ENCODE measurements at regions of chr6 and their contacts with region 1.

Region 1: DNA sequence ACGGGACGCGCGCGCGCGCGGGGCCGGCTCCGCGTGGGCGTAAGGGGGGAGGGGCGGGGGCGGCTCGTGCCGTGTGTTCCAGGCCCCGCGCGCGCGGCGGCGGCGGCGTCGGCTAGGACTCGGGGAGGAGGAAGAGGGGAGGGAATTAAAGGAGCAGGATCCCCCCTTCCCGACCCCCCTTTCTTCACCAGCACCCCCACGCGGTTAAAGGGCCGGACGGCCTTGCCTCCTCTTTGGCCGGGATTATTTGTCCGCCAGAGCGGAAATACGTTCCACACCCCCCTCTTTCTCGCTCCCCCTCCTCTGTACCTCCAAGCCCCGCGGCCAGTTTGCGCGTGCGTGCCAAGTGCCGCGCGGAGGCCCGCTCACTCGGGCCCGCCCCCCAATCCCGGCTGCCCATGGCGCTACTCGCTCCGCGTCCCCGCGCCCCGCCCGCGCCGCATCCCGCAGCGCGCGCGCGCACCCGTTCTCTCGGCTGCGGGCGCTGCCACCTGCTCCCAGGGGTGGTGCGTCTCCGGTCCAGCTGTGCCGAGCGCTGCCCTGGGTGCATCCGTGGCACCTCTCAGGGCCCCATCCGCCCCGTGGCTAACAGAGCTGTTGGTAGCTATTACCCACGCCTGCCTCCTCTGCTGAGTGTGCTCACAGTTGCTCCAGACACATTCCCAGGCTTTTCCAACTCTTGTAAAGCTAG is at the start of gene ZBTB12:
- DNase-seq: peak; percentile 83
- ATAC-seq: peak; percentile 69
- H3K4me3 Mint-ChIP-seq: peak within 1 kb of the TSS; percentile 89
- H3K27ac Mint-ChIP-seq: peak within 1 kb of the TSS; percentile 86
- H3K4me1 Mint-ChIP-seq: peaks cover 27% of the 10 kb centered on the region
- H3K27me3 Mint-ChIP-seq: no peaks in the 10 kb centered on the region
- CTCF ChIP-seq: no peak
- total RNA-seq, gene ZBTB12: 4.8 and 5.5 TPM in 2 replicates

Region 2: DNA sequence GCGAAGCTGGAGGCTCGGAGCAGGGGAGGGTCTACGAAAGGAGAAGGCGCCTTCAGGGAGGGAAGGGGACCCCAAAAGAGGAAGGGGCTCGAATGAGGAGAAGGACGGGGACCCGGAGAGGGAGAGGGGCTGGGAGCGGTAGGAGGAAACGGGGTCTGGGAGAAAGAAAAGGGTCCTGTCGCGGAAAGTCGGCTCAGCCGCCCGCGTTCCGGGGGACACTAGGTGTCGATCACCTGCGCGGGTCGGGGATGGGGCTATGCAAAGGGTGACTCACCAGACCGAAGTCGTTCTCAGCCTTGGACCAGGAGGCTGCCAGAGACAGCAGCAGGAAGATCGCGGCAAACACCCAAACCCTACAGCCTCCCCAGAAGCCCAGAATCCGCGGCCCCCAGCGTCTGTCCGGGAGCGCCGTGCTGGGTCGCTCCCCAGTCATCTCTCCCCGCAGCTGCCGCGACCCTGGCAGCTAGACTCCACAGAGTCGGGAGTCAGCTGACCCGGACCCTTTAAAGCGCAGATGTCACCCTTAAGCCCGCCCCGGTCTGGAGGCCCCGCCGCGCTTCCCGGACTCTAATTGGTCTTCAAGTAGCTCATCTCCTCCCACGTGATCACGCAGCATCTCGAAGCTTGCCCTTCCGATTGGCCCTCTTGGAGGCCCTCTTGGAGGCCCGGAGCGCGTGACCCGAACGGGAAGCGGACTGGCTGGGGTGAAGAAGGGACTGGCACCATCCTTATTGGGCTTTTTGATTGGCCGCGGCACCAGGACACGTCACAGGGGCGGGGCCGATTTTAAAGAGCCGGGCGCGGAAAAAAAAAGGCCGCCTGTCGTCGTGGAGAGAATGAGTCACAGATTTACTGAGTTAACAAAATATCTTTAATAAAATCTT is 39.5 kb before region 1 on chr6 and contains the start of gene NEU1:
- CTCF ChIA-PET with region 1: no interaction called
- POLR2A ChIA-PET with region 1: interaction called, 29 read pairs
- intact Hi-C with region 1: loop called (anchors 1 kb)
- DNase-seq: peak; percentile 93
- ATAC-seq: peak; percentile 91
- H3K4me3 Mint-ChIP-seq: peak within 1 kb of the TSS; percentile 95
- H3K27ac Mint-ChIP-seq: peak within 1 kb of the TSS; percentile 93
- H3K4me1 Mint-ChIP-seq: peaks cover 21% of the 10 kb centered on the region
- H3K27me3 Mint-ChIP-seq: no peaks in the 10 kb centered on the region
- CTCF ChIP-seq: no peak
- total RNA-seq, gene NEU1: 18.3 and 19.2 TPM in 2 replicates

Region 3: DNA sequence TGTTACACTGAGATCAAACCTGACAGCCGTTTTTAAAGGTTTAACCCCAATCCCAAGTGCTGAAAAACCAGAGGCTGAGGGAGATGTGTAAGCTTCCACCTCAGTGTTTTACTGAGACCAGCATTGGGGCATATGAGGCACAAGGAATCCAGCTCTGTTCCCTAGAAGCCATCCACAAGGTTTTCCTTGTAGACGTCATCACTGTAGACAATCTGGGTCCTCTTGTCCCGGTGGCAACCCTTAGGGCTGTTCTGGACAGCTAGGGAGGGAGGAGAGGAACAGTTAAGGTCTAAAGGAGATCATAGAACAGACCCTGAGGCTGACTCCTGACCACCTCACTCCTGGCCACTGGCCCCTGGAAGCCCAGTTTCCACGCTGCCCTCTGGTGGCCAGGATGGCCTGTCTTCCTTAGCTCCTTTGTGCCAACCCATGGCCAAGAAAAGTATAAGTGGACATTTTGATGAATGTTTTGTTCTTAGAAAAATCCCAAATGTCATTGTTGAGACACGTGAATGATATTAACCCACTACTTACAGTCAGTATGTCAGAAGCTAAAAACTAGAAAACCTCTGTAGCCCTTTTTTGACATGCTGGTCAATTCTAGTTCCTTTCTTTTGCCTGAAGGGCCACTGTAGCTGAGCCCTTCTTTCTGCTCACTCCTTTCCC is 50.2 kb after region 1 on chr6:
- CTCF ChIA-PET with region 1: no interaction called
- POLR2A ChIA-PET with region 1: interaction called, 5 read pairs
- intact Hi-C with region 1: loop called (anchors 1 kb)
- DNase-seq: no peak
- ATAC-seq: no peak
- H3K4me3 Mint-ChIP-seq: no peak overlapping the region
- H3K27ac Mint-ChIP-seq: peak overlapping the region; percentile 8
- H3K4me1 Mint-ChIP-seq: peaks cover 1% of the 10 kb centered on the region
- H3K27me3 Mint-ChIP-seq: no peaks in the 10 kb centered on the region
- CTCF ChIP-seq: no peak

Region 4: DNA sequence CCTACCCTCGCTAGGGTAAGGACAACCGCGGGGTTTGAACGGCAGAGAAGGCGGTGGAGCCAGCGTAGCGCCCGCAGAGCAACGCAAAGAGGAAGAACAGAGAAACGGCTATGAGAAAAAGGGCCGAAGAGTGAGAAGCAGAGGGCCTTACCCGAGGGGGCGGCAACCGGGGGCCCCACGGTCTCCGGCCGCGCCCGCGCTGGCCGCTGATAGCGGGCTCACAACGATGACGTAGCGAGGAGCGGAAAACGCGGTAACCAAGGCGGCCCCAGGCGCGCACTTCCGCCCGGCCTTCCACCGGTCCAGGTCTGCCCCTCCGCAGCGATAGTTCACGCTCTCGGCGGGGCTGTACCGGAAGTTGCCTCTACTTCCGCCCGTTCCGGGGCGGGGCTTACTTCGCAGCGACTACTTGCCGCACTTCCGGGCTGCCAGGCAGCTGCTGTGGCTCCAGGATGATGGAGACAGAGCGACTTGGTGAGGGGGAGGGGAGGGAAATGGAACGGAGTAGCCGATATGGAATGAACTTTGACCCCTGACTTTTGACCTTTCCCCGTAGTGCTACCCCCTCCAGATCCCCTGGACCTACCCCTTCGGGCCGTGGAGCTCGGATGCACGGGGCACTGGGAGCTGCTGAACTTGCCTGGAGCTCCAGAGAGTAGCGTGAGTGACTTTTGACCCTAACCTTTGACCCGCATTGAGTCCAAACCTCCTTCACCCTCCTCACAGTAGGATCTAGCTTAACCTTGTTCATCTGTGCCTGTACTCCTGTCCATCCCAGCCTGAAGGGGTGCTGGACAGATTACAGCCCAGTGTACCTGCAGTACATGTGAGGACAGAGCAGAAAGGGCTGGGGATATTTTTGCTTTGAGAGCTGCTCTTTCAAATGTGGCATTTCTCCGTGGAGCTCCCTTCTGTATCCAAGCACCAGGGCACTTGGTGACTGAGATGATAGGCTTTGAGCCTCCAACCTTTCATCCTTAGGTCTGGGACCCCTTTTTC is 56.9 kb after region 1 on chr6 and contains the starts of genes NELFE and SKIC2:
- CTCF ChIA-PET with region 1: no interaction called
- POLR2A ChIA-PET with region 1: interaction called, 9 read pairs
- intact Hi-C with region 1: loop called (anchors 1 kb)
- DNase-seq: peak; percentile 96
- ATAC-seq: peak; percentile 98
- H3K4me3 Mint-ChIP-seq: peak within 1 kb of the TSS; percentile 95
- H3K27ac Mint-ChIP-seq: peak within 1 kb of the TSS; percentile 94
- H3K4me1 Mint-ChIP-seq: peaks cover 33% of the 10 kb centered on the region
- H3K27me3 Mint-ChIP-seq: no peaks in the 10 kb centered on the region
- CTCF ChIP-seq: no peak
- total RNA-seq, gene NELFE: 57.9 and 63.3 TPM in 2 replicates
- total RNA-seq, gene SKIC2: 95.8 and 102 TPM in 2 replicates

Region 5: GRCh38 chr6:31971993-31972708 is 70.1 kb after region 1 on chr6 and contains the start of gene DXO:
- CTCF ChIA-PET with region 1: no interaction called
- POLR2A ChIA-PET with region 1: interaction called, 12 read pairs
- intact Hi-C with region 1: no loop called
- DNase-seq: peak; percentile 96
- ATAC-seq: peak; percentile 89
- H3K4me3 Mint-ChIP-seq: peak within 1 kb of the TSS; percentile 98
- H3K27ac Mint-ChIP-seq: peak within 1 kb of the TSS; percentile 100
- H3K4me1 Mint-ChIP-seq: peaks cover 39% of the 10 kb centered on the region
- H3K27me3 Mint-ChIP-seq: no peaks in the 10 kb centered on the region
- CTCF ChIP-seq: no peak
- total RNA-seq, gene DXO: 23.7 and 29.4 TPM in 2 replicates

Region 6: GRCh38 chr6:32177788-32178546 is 275.9 kb after region 1 on chr6 and contains the start of gene RNF5:
- CTCF ChIA-PET with region 1: no interaction called
- POLR2A ChIA-PET with region 1: no interaction called
- intact Hi-C with region 1: loop called (anchors 5 kb)
- DNase-seq: peak; percentile 63
- ATAC-seq: peak; percentile 82
- H3K4me3 Mint-ChIP-seq: peak within 1 kb of the TSS; percentile 96
- H3K27ac Mint-ChIP-seq: peak within 1 kb of the TSS; percentile 99
- H3K4me1 Mint-ChIP-seq: peaks cover 54% of the 10 kb centered on the region
- H3K27me3 Mint-ChIP-seq: no peaks in the 10 kb centered on the region
- CTCF ChIP-seq: no peak
- total RNA-seq, gene RNF5: 39.7 and 41.8 TPM in 2 replicates

Region 7: GRCh38 chr6:32223258-32224235 is 321.4 kb after region 1 on chr6 and contains the start of gene NOTCH4:
- CTCF ChIA-PET with region 1: no interaction called
- POLR2A ChIA-PET with region 1: no interaction called
- intact Hi-C with region 1: no loop called
- DNase-seq: no peak
- ATAC-seq: no peak
- H3K4me3 Mint-ChIP-seq: peak within 1 kb of the TSS; percentile 2
- H3K27ac Mint-ChIP-seq: peak within 1 kb of the TSS; percentile 83
- H3K4me1 Mint-ChIP-seq: peaks cover 70% of the 10 kb centered on the region
- H3K27me3 Mint-ChIP-seq: no peaks in the 10 kb centered on the region
- CTCF ChIP-seq: no peak
- total RNA-seq, gene NOTCH4: 3.3 and 4.0 TPM in 2 replicates